PC-9 (cell line): ENCODE measurements at regions of chr3 and their contacts with region 1.

Region 1: DNA sequence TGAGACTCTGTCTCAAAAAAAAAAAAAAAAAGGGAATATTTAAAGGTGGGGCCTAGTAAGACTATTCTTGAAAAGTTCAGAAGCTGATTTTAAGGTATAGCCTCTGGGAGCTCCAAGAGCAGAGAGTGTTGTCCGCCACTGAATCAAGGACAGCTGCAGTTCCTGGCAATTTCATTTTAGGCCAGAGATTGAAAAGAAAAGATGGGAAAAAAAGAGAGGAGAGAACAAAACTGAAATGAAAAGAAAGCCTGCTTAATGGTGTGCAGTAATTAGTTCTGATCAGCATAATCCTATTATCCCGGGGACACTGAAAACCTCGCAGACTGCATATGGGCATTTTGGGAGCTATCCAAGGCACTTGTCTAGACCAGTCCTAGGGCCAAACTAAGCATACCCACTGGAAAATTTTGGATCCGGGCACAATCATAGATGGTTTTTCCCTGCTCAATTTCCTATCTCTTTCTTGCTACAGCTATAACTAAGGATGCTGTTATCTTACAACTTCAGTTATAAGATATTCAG is 43.2 kb downstream of the EHHADH start:
- DNase-seq: no peak
- H3K4me3 ChIP-seq: no peak overlapping the region
- H3K27ac ChIP-seq: no peak overlapping the region
- H3K4me1 ChIP-seq: no peaks in the 10 kb centered on the region
- H3K27me3 ChIP-seq: no peaks in the 10 kb centered on the region
- CTCF ChIP-seq: no peak

Region 2: DNA sequence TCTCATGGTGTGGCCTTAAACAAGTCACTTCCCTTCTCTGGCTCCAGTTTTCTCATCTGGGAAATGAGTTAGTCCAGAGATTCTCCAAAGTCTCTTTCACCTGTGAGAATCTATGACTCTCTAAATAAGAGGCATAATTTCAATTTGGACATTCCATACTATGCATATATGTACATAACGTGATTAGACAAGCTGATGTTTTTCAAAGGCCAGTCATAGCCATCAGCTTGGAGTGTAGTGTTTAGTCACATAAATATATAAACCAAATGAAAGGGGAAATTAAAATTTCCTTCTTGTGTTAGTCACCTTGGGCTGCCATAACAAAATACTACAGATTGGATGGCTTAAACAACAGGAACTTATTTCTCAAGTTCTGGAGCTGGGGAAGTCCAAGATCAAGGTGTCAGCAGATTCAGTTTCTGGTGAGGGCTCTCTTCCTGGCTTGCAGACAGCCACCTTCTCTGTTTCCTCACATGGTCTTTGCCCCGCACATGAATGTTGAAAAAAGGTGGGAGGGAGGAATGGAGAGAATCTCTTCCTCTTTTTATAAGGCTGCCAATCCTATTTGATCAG is 268.8 kb after region 1 on chr3:
- CTCF ChIA-PET with region 1: no interaction called
- POLR2A ChIA-PET with region 1: interaction called, 17 read pairs
- intact Hi-C with region 1: no loop called
- DNase-seq: no peak
- H3K4me3 ChIP-seq: no peak overlapping the region
- H3K27ac ChIP-seq: no peak overlapping the region
- H3K4me1 ChIP-seq: no peaks in the 10 kb centered on the region
- H3K27me3 ChIP-seq: no peaks in the 10 kb centered on the region
- CTCF ChIP-seq: no peak